ENCODE measurements at regions of chr4 and their contacts with region 1.

Region 1: GRCh38 chr4:2468445-2469192 is at the start of gene RNF4:
- DNase-seq: peak; percentile 98
- ATAC-seq: peak; percentile 89
- H3K4me3 Mint-ChIP-seq: peak within 1 kb of the TSS; percentile 99
- H3K27ac Mint-ChIP-seq: peak within 1 kb of the TSS; percentile 99
- H3K4me1 Mint-ChIP-seq: peaks cover 43% of the 10 kb centered on the region
- H3K27me3 Mint-ChIP-seq: peaks cover 3% of the 10 kb centered on the region
- total RNA-seq, gene RNF4: 105 to 118 TPM

Region 2: DNA sequence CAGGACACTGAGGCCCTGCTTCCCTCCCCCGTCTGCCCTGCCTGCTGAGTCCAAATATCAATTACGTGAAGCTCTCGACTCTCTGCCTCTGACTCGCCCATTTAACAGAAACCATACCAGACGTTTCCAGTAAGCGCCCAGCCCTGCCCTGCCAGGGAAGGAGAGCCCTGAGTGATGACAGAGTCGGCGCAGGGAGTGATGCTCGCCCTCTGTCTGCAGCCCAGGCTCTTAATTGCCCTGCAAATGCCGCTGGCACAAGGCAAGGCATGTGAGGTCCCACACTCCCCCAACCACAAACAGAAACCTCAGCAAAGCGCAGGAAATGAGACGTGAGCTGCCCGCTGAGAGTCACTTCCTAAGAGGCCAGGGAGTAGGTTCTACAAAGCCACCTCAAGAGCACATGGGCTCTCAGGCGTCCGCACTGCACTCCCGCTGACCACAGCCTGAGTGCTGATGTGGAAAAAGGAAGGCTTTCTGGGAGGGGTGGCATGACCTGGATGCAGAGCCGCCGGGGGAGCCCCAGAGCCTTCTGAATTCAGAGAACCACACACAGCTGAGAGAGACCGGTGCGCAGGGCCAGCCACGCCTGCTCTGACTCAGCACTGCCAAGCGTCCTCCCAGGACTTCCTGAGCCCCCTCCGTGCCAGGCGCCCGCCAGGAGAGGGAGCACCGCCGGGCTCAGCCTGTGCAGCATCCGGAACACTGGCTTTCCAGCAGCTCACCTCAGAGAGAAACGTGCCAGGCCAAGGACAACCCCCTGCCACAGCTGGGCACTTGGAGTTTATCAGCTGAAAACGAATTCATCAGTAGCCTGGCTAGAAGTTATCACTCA is 55.5 kb before region 1 on chr4:
- CTCF ChIA-PET with region 1: interaction called, 9 read pairs
- POLR2A ChIA-PET with region 1: interaction called, 20 read pairs
- DNase-seq: peak; percentile 95
- ATAC-seq: peak; percentile 87
- H3K4me3 Mint-ChIP-seq: peak overlapping the region; percentile 56
- H3K27ac Mint-ChIP-seq: peak overlapping the region; percentile 97
- H3K4me1 Mint-ChIP-seq: peaks cover 71% of the 10 kb centered on the region
- H3K27me3 Mint-ChIP-seq: peaks cover 29% of the 10 kb centered on the region

Region 3: GRCh38 chr4:2484993-2485392 is 16.4 kb after region 1 on chr4:
- CTCF ChIA-PET with region 1: interaction called, 15 read pairs
- POLR2A ChIA-PET with region 1: interaction called, 39 read pairs
- DNase-seq: peak; percentile 87
- ATAC-seq: peak; percentile 93
- H3K4me3 Mint-ChIP-seq: peak overlapping the region; percentile 38
- H3K27ac Mint-ChIP-seq: peak overlapping the region; percentile 83
- H3K4me1 Mint-ChIP-seq: peaks cover 83% of the 10 kb centered on the region
- H3K27me3 Mint-ChIP-seq: no peaks in the 10 kb centered on the region

Region 4: DNA sequence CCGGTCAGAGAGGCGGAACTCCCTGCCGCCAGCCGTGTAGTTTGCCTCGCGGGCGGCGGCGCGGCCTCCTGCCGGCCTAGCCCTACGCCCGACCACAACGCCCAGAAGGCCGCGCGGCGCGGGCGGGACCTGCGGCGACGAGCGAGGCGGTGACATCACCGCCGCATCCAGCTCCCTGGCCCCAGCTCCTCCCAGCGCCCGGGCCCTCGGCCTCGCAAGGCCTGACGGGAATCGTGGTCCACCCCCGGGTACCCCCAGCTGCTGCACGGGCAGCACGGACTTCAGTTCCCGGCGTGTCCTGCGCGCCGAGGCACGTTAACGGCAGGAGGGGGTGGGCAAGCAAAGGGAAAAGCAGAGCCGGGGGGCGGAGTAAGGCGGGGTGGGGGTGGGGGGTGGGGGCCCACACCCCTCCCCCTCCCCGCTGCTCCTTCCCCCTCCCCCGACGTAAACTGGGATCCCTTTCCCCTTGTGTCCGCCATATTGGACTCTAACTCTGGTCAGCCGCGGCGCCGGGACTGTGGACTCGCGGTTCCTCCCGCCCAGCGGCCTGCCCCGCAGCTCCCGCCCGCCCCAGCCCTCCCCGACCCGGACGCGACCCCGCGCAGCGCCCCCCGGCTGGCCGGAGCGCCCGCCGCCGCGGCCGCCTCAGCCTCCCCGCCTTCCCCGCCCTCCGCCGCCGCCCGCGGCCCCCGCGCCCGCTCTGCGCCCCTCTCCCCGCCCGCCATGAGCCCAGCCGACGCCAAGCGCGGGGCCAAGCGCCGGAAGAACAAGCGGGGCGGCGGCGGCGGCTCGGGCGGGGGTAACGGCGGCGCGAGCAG is 67.8 kb after region 1 on chr4 and contains the start of gene FAM193A:
- CTCF ChIA-PET with region 1: interaction called, 5 read pairs
- POLR2A ChIA-PET with region 1: interaction called, 17 read pairs
- DNase-seq: peak; percentile 99
- ATAC-seq: peak; percentile 95
- H3K4me3 Mint-ChIP-seq: peak within 1 kb of the TSS; percentile 88
- H3K27ac Mint-ChIP-seq: peak within 1 kb of the TSS; percentile 93
- H3K4me1 Mint-ChIP-seq: peaks cover 22% of the 10 kb centered on the region
- H3K27me3 Mint-ChIP-seq: no peaks in the 10 kb centered on the region
- total RNA-seq, gene FAM193A: 31.9 to 33.0 TPM

Measured in activated CD8-positive, alpha-beta T cell treated with anti-CD3 and anti-CD28 coated beads, Interleukin-2, amount 10 ng/mL, durations not matched to agents 7 days and 5 days (primary cell).